ENCODE measurements at regions of chr13 and their contacts with region 1.

Region 1: GRCh38 chr13:107329991-107330390 is 762.1 kb upstream of the ARGLU1 start:
- DNase-seq: no peak
- ATAC-seq: no peak
- H3K4me3 ChIP-seq: no peak overlapping the region
- H3K27ac ChIP-seq: no peak overlapping the region
- H3K4me1 ChIP-seq: no peaks in the 10 kb centered on the region
- H3K27me3 ChIP-seq: no peaks in the 10 kb centered on the region
- CTCF ChIP-seq: no peak

Region 2: DNA sequence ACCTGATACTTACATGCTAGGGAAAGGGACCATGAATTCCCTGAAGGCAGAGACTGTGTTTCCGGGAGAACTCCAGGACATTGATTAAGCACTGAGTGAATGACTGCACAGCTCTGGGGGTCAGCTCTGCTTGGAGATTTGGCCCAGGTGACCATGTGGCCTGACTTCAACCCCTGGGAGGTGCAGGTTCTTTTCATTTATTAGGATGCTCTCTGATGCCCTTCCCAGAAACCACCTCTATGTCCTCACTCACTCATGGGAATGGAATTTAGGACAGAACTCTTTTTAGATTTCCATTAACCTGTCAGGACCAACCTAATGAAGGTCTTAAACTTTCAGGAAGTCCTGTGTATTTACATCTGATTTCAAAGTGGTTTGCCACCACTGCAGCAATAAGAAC is 368.8 kb before region 1 on chr13:
- intact Hi-C with region 1: loop called in 1 of 10 experiments (anchors 5 kb)
- DNase-seq: no peak
- ATAC-seq: no peak
- H3K4me3 ChIP-seq: no peak overlapping the region
- H3K27ac ChIP-seq: no peak overlapping the region
- H3K4me1 ChIP-seq: no peaks in the 10 kb centered on the region
- H3K27me3 ChIP-seq: no peaks in the 10 kb centered on the region
- CTCF ChIP-seq: no peak

Region 3: DNA sequence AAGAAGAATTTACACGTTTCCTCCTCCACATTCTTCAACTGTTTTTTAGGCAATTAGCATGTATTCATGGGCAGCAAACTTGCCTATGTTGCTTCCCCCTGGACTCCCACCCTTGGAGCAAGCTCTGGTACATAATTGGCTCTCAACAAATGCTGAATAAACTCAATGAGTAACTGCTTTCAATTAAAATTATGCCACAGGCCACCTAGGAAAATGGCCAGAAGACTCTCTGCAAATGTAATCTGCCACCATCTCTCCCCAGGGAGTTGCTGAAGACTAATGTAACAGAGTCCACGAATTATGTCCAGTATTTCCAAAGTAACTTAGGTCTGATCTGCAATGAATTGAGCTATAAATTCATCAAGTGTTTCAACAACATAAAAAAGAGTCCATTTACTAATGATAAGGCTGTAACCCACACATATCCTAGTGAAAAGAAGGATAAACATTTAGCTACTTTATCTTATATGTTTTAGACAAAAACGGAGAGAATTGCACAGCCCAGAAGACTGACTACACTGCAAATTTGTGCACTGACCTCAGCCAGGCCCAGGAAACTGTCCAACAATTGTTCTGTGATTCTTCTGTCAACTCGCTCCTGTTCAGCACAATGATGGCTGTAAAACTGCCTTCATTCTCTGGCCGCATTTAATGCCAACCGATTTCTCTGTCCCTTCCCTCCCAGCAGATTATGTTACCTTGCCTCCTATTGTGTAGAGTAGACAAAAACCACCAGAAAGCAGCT is 46.5 kb after region 1 on chr13:
- intact Hi-C with region 1: no loop called
- DNase-seq: no peak
- ATAC-seq: no peak
- H3K4me3 ChIP-seq: no peak overlapping the region
- H3K27ac ChIP-seq: no peak overlapping the region
- H3K4me1 ChIP-seq: peaks cover 0 to 12% (median 0%) of the 10 kb centered on the region in 9 donors
- H3K27me3 ChIP-seq: no peaks in the 10 kb centered on the region
- CTCF ChIP-seq: no peak

Measured in heart right ventricle (tissue), 16 donors.